HAP-1 (cell line): ENCODE measurements at regions of chr12 and their contacts with region 1.

Region 1: GRCh38 chr12:62793256-62794217 is 141.4 kb downstream of the PPM1H start:
- DNase-seq: peak; percentile 78 to 87
- H3K4me3 ChIP-seq: no peak overlapping the region
- H3K4me1 ChIP-seq: peaks cover 8% of the 10 kb centered on the region
- H3K27me3 ChIP-seq: no peaks in the 10 kb centered on the region

Region 2: DNA sequence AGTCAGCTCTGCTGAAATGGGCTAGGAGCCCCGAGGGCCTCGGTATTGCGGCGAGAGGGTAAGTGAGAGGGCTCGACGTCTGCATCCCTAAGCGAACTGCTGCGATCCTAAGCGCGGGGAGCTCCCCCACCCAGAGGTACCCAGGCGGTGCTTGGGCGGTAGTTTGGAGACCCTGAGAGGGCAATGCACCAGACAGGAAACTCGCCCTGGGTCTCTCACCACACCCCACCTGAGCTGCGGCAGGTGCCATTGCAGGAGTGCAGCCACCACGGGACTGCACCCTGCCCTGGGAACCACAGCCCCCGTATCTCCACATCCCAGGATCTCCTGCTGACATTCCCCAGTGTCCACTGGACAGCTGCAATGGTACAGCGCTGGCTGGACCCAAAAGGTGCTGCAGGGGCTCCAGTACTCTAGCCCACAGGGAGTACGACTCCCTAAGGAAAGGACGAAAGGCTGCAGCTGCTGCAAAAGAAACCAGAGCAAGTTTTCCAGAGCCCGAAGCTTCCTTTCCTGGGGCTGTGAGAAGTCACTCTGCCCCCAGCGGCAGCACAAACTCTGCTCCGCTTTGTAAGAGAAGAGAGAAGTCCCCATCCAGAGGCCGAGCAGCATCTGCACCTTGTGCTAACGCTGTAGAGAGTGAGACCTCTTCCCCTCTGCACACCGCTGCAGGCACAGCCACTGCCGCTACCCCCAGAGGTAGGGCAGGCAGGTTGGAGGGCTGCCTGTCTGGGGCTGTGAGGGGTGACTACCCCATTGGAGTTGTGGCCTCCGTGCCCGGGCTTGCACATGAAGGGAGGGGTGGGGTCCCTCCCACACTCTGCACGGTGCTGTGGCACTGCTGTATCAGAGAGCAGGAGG is 358.0 kb before region 1 on chr12:
- in situ Hi-C with region 1: loop called (anchors 5 kb)
- DNase-seq: peak; percentile 41 to 80
- H3K4me3 ChIP-seq: peak overlapping the region; percentile 22
- H3K4me1 ChIP-seq: 0 out of 2 replicates have a peak, but pooled peaks cover 3% of the 10 kb centered on the region
- H3K27me3 ChIP-seq: no peaks in the 10 kb centered on the region

Region 3: GRCh38 chr12:62581288-62582064 is 212.1 kb before region 1 on chr12:
- in situ Hi-C with region 1: loop called (anchors 5 kb)
- DNase-seq: peak in 1 of 2 experiments; percentile 79
- H3K4me3 ChIP-seq: no peak overlapping the region
- H3K4me1 ChIP-seq: no peaks in the 10 kb centered on the region
- H3K27me3 ChIP-seq: no peaks in the 10 kb centered on the region

Region 4: GRCh38 chr12:62647586-62647985 is 146.0 kb before region 1 on chr12:
- in situ Hi-C with region 1: no loop called
- DNase-seq: no peak
- H3K4me3 ChIP-seq: no peak overlapping the region
- H3K4me1 ChIP-seq: peaks cover 3% of the 10 kb centered on the region
- H3K27me3 ChIP-seq: no peaks in the 10 kb centered on the region

Region 5: DNA sequence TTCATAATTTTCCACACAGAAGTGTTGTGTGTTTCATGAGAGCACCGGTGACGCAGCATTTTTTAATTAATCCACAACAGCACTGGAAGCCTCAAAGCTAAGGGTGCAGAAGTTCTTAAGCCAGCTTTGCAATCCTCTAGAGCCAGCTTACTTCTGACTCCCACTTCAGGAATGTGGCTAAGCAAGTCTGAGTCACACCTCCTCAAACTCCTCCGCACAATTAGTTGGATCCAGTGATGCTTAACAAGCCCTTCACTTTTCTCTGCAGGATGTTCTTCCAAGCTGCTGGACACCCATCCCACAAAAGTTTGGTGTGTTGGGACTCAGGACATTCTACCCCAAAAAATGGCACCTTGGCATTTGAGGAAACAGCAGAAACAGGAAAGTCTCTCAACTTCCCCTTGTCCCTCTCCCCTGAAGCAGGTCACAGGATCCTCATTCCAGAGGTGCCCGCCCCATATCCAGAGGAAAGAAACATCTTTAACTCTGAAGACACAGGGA is 68.5 kb before region 1 on chr12:
- in situ Hi-C with region 1: no loop called
- DNase-seq: peak; percentile 65 to 80
- H3K4me3 ChIP-seq: no peak overlapping the region
- H3K4me1 ChIP-seq: peaks cover 17% of the 10 kb centered on the region
- H3K27me3 ChIP-seq: no peaks in the 10 kb centered on the region